ENCODE measurements at regions of chr3 and their contacts with region 1.

Region 1: DNA sequence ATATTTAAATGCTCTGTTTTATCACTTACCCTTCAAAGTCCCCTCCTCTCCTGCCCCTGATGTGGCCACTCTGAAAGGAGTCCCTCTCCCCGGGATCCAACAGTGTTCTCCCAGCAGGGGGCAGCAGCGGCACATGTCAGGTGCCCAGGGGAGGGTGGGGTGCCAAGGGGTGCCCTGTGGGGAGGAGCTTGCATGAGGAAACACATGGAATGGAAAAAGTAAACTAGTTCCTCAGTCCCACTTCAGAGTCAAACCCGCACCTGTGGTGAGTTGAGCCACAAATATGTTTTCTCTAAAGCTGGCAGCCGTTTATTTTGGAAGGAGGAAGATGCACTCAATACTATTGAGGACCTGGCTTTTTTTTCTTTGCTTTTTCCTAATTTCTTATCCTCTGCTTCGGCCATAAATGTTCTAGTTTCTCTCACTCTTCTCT is 30.1 kb upstream of the NRROS start:
- DNase-seq: peak; percentile 96 to 99 (median 99)
- H3K4me3 ChIP-seq: peak overlapping the region in 3 of 7 experiments; percentile 40 to 52 (median 47)
- H3K27ac ChIP-seq: peak overlapping the region; percentile 23 to 72
- H3K4me1 ChIP-seq: peaks cover 16 to 48% (median 44%) of the 10 kb centered on the region in 4 experiments
- H3K27me3 ChIP-seq: no peaks in the 10 kb centered on the region

Region 2: DNA sequence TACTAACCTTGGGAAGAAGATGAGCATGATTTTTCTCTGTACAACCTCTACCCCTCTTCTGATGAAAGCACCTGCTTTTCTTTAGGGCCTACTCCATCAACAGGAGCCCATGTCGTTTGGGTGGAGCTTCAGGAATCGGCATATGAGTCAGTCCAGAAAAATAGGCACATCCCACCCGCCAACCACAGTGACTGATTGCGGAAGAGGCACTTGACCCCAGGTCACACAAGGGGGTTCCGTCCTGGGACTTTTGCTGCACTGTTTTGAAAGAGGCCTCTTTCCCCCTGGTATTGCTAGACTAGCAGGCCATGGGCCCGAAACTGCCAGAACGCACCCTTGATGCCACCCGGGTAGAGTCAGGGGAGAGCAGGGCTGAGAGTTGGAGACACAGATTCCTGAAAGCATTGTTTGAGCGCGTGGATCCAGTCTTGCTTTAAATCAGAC is 10.8 kb after region 1 on chr3:
- CTCF ChIA-PET with region 1: interaction called, 14 read pairs
- POLR2A ChIA-PET with region 1: interaction called, 5 read pairs
- DNase-seq: peak; percentile 50 to 92 (median 86)
- H3K4me3 ChIP-seq: peak overlapping the region in 3 of 7 experiments; percentile 2 to 25 (median 24)
- H3K27ac ChIP-seq: peak overlapping the region; percentile 50 to 71
- H3K4me1 ChIP-seq: peaks cover 25 to 80% (median 69%) of the 10 kb centered on the region in 4 experiments
- H3K27me3 ChIP-seq: no peaks in the 10 kb centered on the region

Region 3: GRCh38 chr3:196632046-196632751 is 22.8 kb after region 1 on chr3:
- CTCF ChIA-PET with region 1: interaction called, 306 read pairs
- POLR2A ChIA-PET with region 1: interaction called, 25 read pairs
- DNase-seq: peak; percentile 99 to 100 (median 100)
- H3K4me3 ChIP-seq: peak overlapping the region in 6 of 7 experiments; percentile 3 to 83 (median 77)
- H3K27ac ChIP-seq: peak overlapping the region; percentile 98 to 99
- H3K4me1 ChIP-seq: peaks cover 19 to 88% (median 76%) of the 10 kb centered on the region in 4 experiments
- H3K27me3 ChIP-seq: no peaks in the 10 kb centered on the region

Region 4: GRCh38 chr3:196650740-196651311 is 41.5 kb after region 1 on chr3:
- CTCF ChIA-PET with region 1: interaction called, 306 read pairs
- POLR2A ChIA-PET with region 1: no interaction called
- DNase-seq: peak in 2 of 3 donors; percentile 54 to 62
- H3K4me3 ChIP-seq: no peak overlapping the region
- H3K27ac ChIP-seq: peak overlapping the region in 1 of 2 experiments; percentile 52
- H3K4me1 ChIP-seq: peaks cover 5 to 57% (median 47%) of the 10 kb centered on the region in 4 experiments
- H3K27me3 ChIP-seq: no peaks in the 10 kb centered on the region

Region 5: GRCh38 chr3:196677353-196677752 is 68.0 kb after region 1 on chr3:
- CTCF ChIA-PET with region 1: interaction called, 15 read pairs
- POLR2A ChIA-PET with region 1: no interaction called
- DNase-seq: no peak
- H3K4me3 ChIP-seq: no peak overlapping the region
- H3K27ac ChIP-seq: no peak overlapping the region
- H3K4me1 ChIP-seq: peaks cover 0 to 3% (median 1%) of the 10 kb centered on the region in 4 experiments
- H3K27me3 ChIP-seq: no peaks in the 10 kb centered on the region

Region 6: DNA sequence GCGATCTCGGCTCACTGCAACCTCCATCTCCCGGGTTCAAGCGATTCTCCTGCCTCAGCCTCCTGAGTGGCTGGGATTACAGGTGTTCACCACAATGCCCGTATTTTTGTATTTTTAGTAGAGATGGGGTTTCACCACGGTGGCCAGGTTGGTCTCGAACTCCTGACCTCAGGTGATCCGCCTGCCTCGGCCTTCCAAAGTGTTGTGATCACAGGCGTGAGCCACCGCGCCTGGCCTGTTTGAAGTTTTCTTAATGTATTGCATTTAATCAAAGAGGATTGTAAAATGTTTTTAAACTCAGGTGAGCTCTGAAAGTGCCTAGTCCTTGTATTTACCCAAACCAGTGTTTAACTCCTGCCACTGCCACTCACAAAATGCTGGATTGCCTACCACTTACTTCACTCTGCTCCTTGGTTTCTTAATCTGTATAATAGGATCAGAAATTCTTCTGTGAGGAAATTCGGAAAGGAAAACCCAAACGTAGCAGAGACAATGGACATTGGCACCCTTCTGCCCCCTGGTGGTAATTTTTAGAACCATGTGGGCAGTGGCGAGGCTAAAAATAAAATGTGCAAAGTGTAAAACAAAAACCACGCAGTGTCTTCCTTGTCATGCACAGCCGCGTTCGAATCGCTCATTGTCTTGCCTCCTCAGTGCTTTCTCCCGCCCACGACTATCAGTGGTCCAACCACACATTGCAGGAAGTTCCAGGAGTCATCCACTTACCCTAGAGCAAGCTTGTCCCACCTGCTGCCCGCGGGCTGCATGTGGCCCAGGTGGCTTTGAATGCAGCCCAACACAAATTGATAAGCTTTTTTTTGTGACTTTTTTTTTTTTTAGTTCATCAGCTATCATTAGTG is 75.4 kb after region 1 on chr3:
- CTCF ChIA-PET with region 1: interaction called, 106 read pairs
- POLR2A ChIA-PET with region 1: interaction called, 4 read pairs
- DNase-seq: peak; percentile 67 to 88 (median 83)
- H3K4me3 ChIP-seq: peak overlapping the region in 4 of 7 experiments; percentile 13 to 62 (median 44)
- H3K27ac ChIP-seq: peak overlapping the region in 1 of 2 experiments; percentile 17
- H3K4me1 ChIP-seq: peaks cover 10 to 42% (median 24%) of the 10 kb centered on the region in 4 experiments
- H3K27me3 ChIP-seq: no peaks in the 10 kb centered on the region

Region 7: DNA sequence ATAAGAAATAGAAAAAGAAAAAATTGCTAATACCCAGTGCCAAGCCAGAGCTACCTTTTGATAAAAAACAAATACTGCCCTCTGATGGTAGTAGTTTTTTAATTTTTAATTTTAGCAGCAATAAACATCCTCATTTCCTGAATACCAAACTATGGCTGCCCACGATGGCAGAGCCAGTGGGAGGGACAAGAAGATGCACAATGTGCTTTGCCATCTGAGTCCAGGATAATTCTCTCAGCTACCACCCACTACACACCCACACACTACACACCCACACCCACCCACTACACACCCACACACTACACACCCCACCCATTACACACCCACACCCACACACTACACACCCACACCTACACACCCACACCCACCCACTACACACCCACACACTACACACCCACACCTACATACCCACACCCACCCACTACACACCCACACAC is 84.9 kb after region 1 on chr3:
- CTCF ChIA-PET with region 1: interaction called, 28 read pairs
- POLR2A ChIA-PET with region 1: no interaction called
- DNase-seq: peak; percentile 68 to 81 (median 80)
- H3K4me3 ChIP-seq: peak overlapping the region in 2 of 7 experiments; percentile 33 to 57
- H3K27ac ChIP-seq: no peak overlapping the region
- H3K4me1 ChIP-seq: peaks cover 2 to 33% (median 14%) of the 10 kb centered on the region in 4 experiments
- H3K27me3 ChIP-seq: no peaks in the 10 kb centered on the region

Region 8: DNA sequence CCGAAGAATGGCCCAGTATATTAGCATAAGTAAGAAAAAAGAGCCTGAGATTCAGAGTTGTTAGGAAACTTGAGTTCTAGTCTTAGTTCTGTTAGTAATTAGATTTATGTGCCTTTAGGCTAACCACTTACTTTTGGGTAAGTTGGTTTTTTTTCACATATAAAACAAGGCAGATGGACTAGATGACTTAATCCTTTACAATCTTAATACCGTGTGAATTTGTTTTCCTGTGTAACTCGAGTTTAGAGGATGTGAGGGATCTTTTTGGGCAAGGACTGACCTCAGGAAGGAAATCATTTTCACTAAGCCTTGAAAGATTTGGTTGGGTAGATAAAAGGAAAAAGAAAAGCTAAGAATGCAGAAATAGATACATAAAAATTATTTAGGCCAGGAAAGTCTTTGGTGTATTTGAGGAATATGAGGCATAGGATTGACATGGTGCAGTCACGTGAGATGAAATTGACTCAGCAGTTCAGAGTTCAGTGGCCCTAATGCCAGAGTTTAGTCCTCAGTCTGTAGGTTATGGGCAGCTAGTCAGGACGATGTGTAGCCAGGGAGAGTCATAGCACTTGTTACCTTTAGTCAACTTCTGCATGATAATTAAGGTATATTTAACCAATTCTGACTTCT is 164.9 kb after region 1 on chr3:
- CTCF ChIA-PET with region 1: no interaction called
- POLR2A ChIA-PET with region 1: no interaction called
- DNase-seq: peak; percentile 22 to 42 (median 37)
- H3K4me3 ChIP-seq: peak overlapping the region in 1 of 7 experiments; percentile 6
- H3K27ac ChIP-seq: no peak overlapping the region
- H3K4me1 ChIP-seq: peaks cover 7 to 29% (median 22%) of the 10 kb centered on the region in 4 experiments
- H3K27me3 ChIP-seq: no peaks in the 10 kb centered on the region

Region 9: GRCh38 chr3:196813903-196814302 is 204.5 kb after region 1 on chr3:
- CTCF ChIA-PET with region 1: no interaction called
- POLR2A ChIA-PET with region 1: no interaction called
- DNase-seq: no peak
- H3K4me3 ChIP-seq: no peak overlapping the region
- H3K27ac ChIP-seq: no peak overlapping the region
- H3K4me1 ChIP-seq: no peaks in the 10 kb centered on the region
- H3K27me3 ChIP-seq: no peaks in the 10 kb centered on the region